SK-N-SH (cell line): ENCODE measurements at regions of chr7 and their contacts with region 1.

Region 1: GRCh38 chr7:101287032-101287431 is 34.6 kb downstream of the IFT22 start:
- DNase-seq: no peak
- H3K4me3 ChIP-seq: no peak overlapping the region
- H3K27ac ChIP-seq: no peak overlapping the region
- H3K4me1 ChIP-seq: peaks cover 0 to 2% of the 10 kb centered on the region in 2 experiments; a peak in 1 of 4 replicates
- H3K27me3 ChIP-seq: peaks cover 23% of the 10 kb centered on the region
- CTCF ChIP-seq: no peak
- EP300 ChIP-seq: no peak
- RAD21 ChIP-seq: no peak

Region 2: GRCh38 chr7:101094416-101095375 is 192.3 kb before region 1 on chr7:
- CTCF ChIA-PET with region 1: interaction called, 14 read pairs
- POLR2A ChIA-PET with region 1: no interaction called
- DNase-seq: peak; percentile 80
- H3K4me3 ChIP-seq: peak overlapping the region in 1 of 2 experiments; percentile 9; a peak in 1 of 4 replicates
- H3K27ac ChIP-seq: peak overlapping the region; percentile 18 to 93; a peak in 3 of 4 replicates
- H3K4me1 ChIP-seq: peaks cover 2 to 24% of the 10 kb centered on the region in 2 experiments; a peak in 3 of 4 replicates
- H3K27me3 ChIP-seq: no peaks in the 10 kb centered on the region
- CTCF ChIP-seq: peak; percentile 99
- EP300 ChIP-seq: no peak
- RAD21 ChIP-seq: peak; percentile 76

Region 3: GRCh38 chr7:101201695-101202604 is 85.1 kb before region 1 on chr7:
- CTCF ChIA-PET with region 1: interaction called, 10 read pairs
- POLR2A ChIA-PET with region 1: no interaction called
- DNase-seq: peak; percentile 42
- H3K4me3 ChIP-seq: no peak overlapping the region
- H3K27ac ChIP-seq: no peak overlapping the region
- H3K4me1 ChIP-seq: no peaks in the 10 kb centered on the region
- H3K27me3 ChIP-seq: no peaks in the 10 kb centered on the region; the same call in 1 of the 2 replicates
- CTCF ChIP-seq: no peak
- EP300 ChIP-seq: no peak
- RAD21 ChIP-seq: no peak

Region 4: GRCh38 chr7:101244375-101245146 is 42.5 kb before region 1 on chr7 and contains the start of gene FIS1:
- CTCF ChIA-PET with region 1: interaction called, 53 read pairs
- POLR2A ChIA-PET with region 1: interaction called, 7 read pairs
- DNase-seq: peak; percentile 98
- H3K4me3 ChIP-seq: peak within 1 kb of the TSS; percentile 77 to 89
- H3K27ac ChIP-seq: peak within 1 kb of the TSS; percentile 80 to 93
- H3K4me1 ChIP-seq: peaks cover 7 to 14% of the 10 kb centered on the region in 2 experiments; a peak in 1 of 4 replicates
- H3K27me3 ChIP-seq: no peaks in the 10 kb centered on the region
- CTCF ChIP-seq: peak; percentile 98
- EP300 ChIP-seq: no peak
- RAD21 ChIP-seq: no peak; the same call in 1 of the 2 replicates
- polyA plus RNA-seq, gene FIS1: 1,071 and 1,313 TPM in 2 replicates

Region 5: DNA sequence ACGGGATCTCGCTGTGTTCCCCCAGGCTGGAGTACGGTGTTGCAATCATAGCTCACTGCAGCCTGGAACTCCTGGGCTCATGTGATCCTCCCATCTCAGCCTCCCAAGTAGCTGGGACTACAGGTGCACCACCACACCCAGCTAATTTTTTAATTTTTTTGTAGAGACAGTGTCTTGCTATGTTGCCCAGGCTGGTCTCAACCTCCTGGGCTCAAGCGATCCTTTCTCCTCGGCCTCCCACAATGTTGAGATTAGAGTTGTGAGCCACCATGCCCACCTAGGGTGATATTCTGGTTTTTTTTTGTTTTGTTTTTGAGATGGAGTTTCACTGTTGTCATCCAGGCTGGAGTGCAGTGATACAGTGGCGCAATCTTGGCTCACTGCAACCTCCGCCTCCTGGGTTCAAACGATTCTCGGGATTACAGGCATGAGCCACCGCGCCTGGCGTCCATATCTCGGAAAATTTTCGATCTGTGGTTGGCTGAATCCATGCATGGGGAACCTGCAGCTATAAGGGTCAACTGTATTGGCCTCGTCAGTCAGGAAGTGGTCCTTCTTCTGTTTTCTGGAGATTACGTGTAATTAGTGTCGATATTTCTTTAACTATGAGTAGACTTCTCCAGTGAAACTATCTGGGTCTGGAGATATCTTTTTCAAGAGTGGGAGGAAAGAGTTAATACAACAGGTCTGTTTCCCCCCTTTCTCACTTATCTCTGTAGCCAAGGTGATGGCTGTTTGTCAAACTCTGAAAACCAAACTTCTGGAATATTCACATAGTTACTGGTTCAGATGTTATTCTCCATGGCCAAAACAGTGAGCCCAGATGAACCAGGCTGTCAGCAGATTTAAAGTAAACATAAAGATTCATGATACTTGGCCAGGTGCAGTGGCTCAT is 21.2 kb before region 1 on chr7:
- CTCF ChIA-PET with region 1: interaction called, 18 read pairs
- POLR2A ChIA-PET with region 1: no interaction called
- DNase-seq: no peak
- H3K4me3 ChIP-seq: no peak overlapping the region
- H3K27ac ChIP-seq: no peak overlapping the region
- H3K4me1 ChIP-seq: no peaks in the 10 kb centered on the region
- H3K27me3 ChIP-seq: no peaks in the 10 kb centered on the region
- CTCF ChIP-seq: no peak
- EP300 ChIP-seq: no peak
- RAD21 ChIP-seq: no peak

Region 6: DNA sequence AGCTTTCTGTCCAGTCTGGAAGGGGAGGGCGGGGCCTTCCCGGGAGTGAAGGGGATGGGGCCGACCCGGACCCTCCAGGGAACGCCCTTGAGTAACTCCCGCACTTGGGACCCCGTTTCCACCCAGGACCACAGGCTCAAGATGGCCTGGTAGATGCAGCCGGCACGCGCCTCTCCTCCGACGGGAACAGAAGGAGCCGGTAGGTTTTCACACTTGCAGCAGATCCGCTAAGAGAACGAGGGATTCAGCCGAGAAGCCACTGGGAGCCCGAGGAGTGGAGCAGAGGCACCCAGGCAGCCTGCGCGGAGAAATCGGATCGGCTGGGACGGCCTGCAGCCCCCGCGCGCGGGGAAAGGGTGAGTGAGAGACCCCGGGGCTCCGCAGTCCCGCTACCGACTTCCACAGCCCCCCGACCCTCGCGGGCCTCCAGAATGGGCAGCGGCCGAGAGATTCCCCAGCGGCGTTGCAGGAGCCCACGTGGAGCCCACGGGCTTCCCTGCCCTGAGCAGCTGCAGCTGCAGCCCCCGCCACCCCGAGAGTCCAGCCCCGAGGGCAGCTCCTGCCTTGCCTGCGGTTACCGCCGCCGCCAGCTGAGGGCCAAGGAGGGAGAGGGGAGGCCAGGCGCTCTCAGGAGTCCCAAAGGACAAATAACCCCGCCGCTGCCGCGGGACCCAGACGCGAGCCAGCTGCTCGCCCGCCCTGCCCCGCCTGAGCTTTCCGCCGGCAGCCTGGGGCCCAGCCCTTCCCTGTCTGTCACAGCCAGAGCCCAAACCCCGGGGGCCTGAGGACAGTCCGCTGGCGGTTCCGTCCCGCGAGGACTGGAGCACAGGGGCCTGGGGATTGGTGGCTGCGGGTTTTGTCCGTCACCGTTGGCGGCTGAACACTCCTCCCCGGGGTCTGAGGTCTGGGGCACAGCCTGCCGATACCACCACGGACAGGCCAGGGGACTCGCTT is 12.8 kb after region 1 on chr7:
- CTCF ChIA-PET with region 1: interaction called, 20 read pairs
- POLR2A ChIA-PET with region 1: no interaction called
- DNase-seq: peak; percentile 52
- H3K4me3 ChIP-seq: no peak overlapping the region; a peak in 1 of 4 replicates
- H3K27ac ChIP-seq: no peak overlapping the region
- H3K4me1 ChIP-seq: no peaks in the 10 kb centered on the region; a peak in 1 of 4 replicates
- H3K27me3 ChIP-seq: peaks cover 43% of the 10 kb centered on the region
- CTCF ChIP-seq: no peak
- EP300 ChIP-seq: no peak
- RAD21 ChIP-seq: no peak

Region 7: DNA sequence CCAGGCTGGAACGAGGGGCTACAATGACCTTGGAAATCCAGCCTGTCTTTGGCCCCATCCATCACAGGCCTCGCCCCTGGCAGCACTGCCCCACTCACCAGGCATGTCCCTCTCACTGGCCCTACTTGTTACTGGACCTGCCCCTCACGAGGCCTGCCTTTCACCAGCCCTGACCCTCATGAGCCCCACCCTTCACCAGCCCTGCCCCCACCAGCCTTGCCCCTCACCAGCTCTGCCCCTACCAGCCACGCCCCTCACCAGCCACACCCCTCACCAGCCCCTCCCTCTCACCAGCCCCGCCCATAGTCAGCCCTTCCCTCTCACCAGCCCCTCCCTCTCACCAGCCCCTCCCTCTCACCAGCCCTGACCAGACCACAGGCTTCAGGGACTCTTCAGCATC is 133.4 kb after region 1 on chr7:
- CTCF ChIA-PET with region 1: no interaction called
- POLR2A ChIA-PET with region 1: no interaction called
- DNase-seq: peak; percentile 62
- H3K4me3 ChIP-seq: no peak overlapping the region
- H3K27ac ChIP-seq: no peak overlapping the region
- H3K4me1 ChIP-seq: no peaks in the 10 kb centered on the region
- H3K27me3 ChIP-seq: peaks cover 44% of the 10 kb centered on the region
- CTCF ChIP-seq: no peak
- EP300 ChIP-seq: no peak
- RAD21 ChIP-seq: no peak

Region 8: DNA sequence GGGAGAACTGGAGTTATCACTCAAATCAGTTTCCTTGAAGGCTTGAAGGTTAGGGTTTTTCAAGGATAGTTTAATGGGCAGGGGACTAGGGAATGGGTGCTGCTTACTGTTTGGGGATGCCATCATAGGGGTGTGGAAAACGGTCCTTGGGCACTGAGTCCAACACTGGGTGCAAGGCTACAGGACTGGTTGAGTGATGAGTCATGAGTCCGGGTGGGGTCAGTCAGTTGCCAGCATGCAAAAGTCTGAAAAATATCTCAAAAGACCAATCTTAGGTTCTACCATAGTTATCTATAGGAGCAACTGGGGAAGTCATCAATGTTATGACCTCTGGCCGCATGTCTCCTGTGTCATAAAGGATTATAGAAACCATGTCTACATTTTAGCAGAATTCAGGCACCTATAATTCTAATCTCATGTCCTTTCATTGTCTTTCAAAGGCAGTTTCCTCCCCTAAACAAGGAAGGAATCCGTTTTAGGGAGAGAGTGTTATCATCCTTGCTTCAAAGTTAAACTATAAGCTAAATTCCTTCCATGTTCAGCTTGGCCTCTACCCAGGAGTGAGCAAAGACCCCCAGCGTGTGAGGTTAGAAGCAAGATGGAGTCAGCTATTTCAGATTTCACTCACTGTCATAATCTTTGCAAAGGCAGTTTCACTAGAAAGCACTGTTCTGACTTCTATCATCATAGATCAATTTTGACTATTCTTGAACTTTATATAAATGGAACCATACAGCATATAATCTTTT is 170.1 kb after region 1 on chr7:
- CTCF ChIA-PET with region 1: no interaction called
- POLR2A ChIA-PET with region 1: no interaction called
- DNase-seq: no peak
- H3K4me3 ChIP-seq: no peak overlapping the region
- H3K27ac ChIP-seq: no peak overlapping the region
- H3K4me1 ChIP-seq: no peaks in the 10 kb centered on the region
- H3K27me3 ChIP-seq: no peaks in the 10 kb centered on the region
- CTCF ChIP-seq: no peak
- EP300 ChIP-seq: no peak
- RAD21 ChIP-seq: no peak